ENCODE measurements at regions of chr7 and their contacts with region 1.

Region 1: DNA sequence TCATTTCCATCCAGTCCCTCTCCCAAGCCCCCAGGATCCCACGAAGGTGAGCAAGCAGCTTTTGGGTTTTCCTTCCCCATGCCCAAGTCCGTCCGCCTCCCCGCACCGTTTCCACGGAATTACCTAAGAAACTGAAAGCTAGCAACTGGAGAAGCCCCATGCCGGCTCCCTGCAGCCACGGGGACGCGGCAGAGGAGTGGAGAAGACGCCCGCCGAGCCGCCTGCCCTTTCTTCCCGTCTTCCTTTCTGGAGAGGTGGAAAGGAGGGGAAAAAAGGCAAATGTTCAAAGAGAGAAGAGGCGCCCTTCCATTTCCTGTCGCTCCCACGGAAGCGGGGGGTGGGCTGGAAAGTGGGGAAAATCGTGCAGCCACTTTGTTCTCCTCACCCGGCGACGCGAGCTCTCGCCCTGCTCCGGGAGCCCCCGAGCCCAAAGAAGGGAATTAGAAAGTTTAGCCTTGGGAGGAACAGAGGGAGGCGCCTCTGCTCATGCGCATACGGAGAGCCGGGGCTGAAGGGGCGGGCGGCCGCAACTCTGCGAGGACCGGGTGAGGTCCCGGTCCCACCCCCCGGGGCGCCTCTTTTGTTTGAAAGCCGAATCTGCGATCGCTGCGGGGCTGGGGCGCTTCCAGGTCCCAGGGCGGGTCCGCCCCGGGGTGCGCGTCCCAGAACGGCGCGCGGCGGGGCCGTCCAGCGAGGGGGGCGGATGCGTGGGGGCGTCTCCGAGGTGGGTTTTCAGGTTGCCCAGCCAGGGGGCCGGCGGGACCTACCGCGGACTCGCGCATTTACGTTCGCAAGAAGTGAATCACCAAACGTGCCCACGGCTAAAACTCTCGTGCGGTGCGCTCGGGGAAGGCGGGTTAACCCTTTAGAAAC is at the start of gene LAMB1:
- DNase-seq: peak; percentile 64
- H3K4me3 ChIP-seq: peak within 1 kb of the TSS; percentile 71 to 81 (median 80)
- H3K27ac ChIP-seq: peak within 1 kb of the TSS; percentile 55
- H3K4me1 ChIP-seq: peaks cover 41% of the 10 kb centered on the region
- H3K27me3 ChIP-seq: no peaks in the 10 kb centered on the region
- CTCF ChIP-seq: no peak
- total RNA-seq, gene LAMB1: 219 to 285 TPM

Region 2: DNA sequence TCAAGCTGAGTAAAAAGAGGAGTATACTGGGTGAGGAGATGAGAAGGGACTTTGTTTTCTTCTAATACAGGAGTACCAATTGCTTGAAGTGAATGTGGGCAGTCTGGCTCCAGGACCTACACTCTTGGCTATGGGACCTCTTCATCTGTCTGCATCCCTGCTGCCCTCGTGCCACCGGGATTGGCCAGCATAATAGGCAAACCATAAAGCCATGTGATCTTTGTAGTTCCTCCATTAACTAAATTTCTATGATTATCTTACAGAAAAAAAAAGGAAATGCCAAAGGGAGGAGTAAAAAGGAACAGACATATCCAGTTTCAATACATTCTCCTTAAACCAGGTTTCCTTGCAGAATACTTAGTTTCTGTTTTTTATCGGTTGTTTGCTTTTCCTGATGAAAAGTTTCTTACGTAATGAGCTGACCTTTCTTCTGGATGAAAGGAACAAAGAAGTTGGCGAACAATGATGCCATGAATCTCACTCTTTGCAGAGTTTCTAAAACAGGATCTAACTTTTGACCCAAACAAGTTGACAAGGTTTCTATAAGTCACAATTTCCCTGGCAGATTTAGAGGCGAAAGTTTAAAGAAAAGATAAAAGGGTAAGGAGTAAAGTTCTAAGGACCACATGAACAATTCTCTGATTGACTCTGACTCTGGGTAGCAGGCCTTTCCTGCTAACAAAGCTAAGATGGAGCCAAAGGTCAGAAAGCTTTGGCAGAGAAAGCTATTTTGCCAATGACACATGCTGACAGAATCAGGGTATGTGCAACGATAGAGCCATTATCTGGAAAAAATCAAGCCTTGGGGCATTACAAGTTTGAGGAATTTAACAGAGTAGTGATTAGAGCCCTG is 54.1 kb before region 1 on chr7:
- CTCF ChIA-PET with region 1: no interaction called
- dilution Hi-C with region 1: no loop called
- in situ Hi-C with region 1: no loop called
- intact Hi-C with region 1: loop called (anchors 5 kb)
- DNase-seq: peak; percentile 88
- H3K4me3 ChIP-seq: no peak overlapping the region
- H3K27ac ChIP-seq: peak overlapping the region; percentile 36
- H3K4me1 ChIP-seq: peaks cover 80% of the 10 kb centered on the region
- H3K27me3 ChIP-seq: no peaks in the 10 kb centered on the region
- CTCF ChIP-seq: no peak

Region 3: DNA sequence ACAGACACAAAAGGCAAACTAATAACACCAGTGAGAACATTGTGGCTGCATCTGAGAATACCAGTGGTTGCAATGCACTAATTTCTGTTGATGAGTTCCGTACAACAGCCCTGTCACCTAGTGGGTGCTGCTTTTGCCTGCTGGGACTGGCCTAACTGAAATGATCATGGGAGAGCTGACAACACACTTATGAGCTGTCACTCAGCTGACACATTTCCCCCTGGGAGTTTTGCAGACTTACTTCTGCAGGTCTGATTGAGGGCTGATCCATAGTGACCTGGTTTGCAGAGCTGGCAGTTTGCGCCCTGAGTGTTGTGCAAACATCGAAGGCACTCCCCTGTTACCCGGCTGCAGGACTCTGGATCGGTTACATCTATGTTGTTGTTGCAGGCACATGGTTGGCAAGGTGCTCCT is 60.6 kb after region 1 on chr7:
- CTCF ChIA-PET with region 1: no interaction called
- dilution Hi-C with region 1: no loop called
- in situ Hi-C with region 1: no loop called
- intact Hi-C with region 1: loop called (anchors 5 kb)
- DNase-seq: peak; percentile 73
- H3K4me3 ChIP-seq: no peak overlapping the region
- H3K27ac ChIP-seq: no peak overlapping the region
- H3K4me1 ChIP-seq: no peaks in the 10 kb centered on the region
- H3K27me3 ChIP-seq: no peaks in the 10 kb centered on the region
- CTCF ChIP-seq: peak in 1 of 2 donors; percentile 10

Region 4: GRCh38 chr7:108094933-108095710 is 92.2 kb after region 1 on chr7:
- CTCF ChIA-PET with region 1: no interaction called
- dilution Hi-C with region 1: no loop called
- in situ Hi-C with region 1: no loop called
- intact Hi-C with region 1: loop called (anchors 2 kb)
- DNase-seq: peak; percentile 93
- H3K4me3 ChIP-seq: no peak overlapping the region
- H3K27ac ChIP-seq: no peak overlapping the region
- H3K4me1 ChIP-seq: peaks cover 17% of the 10 kb centered on the region
- H3K27me3 ChIP-seq: no peaks in the 10 kb centered on the region
- CTCF ChIP-seq: no peak

Region 5: DNA sequence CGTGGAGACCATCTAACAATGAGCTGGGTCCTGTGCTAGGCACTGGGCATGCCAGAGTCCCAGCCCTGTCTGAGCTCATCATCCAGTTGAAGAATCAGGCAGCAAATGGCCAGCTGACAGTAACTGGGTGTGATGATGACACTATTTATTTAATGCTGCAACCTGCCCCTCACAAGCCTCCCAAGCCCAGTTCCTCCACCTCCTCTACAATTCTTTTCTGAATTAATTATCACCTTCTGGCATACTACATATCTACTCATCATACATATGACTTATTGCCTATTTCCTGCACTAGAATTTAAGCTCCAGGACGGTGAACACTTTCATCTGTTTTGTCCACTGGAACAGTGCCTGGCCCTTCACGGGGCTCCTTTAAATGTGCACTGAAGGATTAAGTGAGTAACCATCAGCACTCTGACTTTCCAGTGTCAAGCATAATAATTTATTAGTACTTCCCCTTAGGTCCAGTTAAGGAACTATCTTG is 223.9 kb after region 1 on chr7:
- CTCF ChIA-PET with region 1: no interaction called
- dilution Hi-C with region 1: no loop called
- in situ Hi-C with region 1: no loop called
- intact Hi-C with region 1: no loop called
- DNase-seq: no peak
- H3K4me3 ChIP-seq: no peak overlapping the region
- H3K27ac ChIP-seq: no peak overlapping the region
- H3K4me1 ChIP-seq: no peaks in the 10 kb centered on the region
- H3K27me3 ChIP-seq: no peaks in the 10 kb centered on the region
- CTCF ChIP-seq: no peak